GM12878 (cell line): ENCODE measurements at regions of chr2 and their contacts with region 1.

Region 1: DNA sequence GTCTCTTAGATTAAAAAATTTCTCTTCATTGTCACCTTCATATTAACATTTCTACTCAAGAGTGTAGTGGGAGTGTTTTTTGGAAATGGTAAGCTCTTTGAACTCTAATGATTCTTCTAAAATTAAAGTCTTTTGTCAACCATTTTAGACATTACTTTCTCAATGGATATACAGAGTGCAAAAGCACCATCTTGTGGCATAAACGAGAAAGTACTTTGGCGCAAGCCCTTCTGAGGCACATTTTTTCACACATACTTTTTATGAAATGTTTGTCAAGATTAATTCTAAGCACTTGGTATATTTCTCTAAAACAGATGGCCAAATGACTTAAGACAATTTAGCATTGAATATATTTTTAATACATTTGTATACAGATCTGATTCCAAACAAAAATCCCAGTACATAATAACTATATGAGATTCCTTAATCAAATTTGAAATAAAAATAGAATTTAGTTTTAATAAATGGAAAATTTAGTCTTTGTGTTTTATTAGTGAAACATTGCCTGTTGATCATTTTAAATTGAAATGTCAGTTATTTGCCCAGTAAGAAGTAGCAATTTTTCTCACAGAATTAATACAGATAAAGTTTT is 63.3 kb upstream of the GALNT5 start:
- DNase-seq: no peak
- ATAC-seq: peak; percentile 83
- H3K4me3 ChIP-seq: no peak overlapping the region
- H3K27ac ChIP-seq: no peak overlapping the region
- H3K4me1 ChIP-seq: peaks cover 10% of the 10 kb centered on the region; the same call in 1 of the 2 replicates
- H3K27me3 ChIP-seq: peaks cover 0 to 3% of the 10 kb centered on the region in 2 experiments; a peak in 1 of 4 replicates
- CTCF ChIP-seq: peak; percentile 59 to 77 (median 63)
- EP300 ChIP-seq: no peak
- POLR2A ChIP-seq: no peak
- RAD21 ChIP-seq: peak; percentile 93

Region 2: DNA sequence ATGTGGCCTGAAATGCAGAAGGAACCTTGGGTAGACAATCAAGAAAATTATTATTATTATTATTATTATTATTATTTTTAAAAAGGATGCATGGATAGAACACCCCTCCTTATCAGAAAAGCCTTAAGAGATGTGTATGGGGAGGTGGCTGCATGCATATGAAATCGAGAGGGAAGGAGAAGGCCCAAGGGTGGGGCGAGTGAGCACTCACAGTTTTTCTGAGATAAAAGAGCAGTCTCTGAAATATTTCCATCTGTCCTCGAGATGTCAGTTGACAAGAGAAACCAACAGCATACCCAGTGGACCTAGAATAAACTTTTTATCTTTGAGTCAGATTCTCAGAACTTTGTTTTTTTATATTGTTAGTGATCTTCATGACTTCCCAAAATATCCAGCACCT is 475.2 kb before region 1 on chr2:
- CTCF ChIA-PET with region 1: no interaction called
- POLR2A ChIA-PET with region 1: no interaction called
- RAD21 ChIA-PET with region 1: no interaction called
- SMC1A ChIA-PET with region 1: no interaction called
- in situ Hi-C with region 1: no loop called
- intact Hi-C with region 1: no loop called
- DNase-seq: no peak
- ATAC-seq: no peak
- H3K4me3 ChIP-seq: no peak overlapping the region
- H3K27ac ChIP-seq: no peak overlapping the region
- H3K4me1 ChIP-seq: no peaks in the 10 kb centered on the region
- H3K27me3 ChIP-seq: no peaks in the 10 kb centered on the region
- CTCF ChIP-seq: no peak
- EP300 ChIP-seq: no peak
- POLR2A ChIP-seq: no peak
- RAD21 ChIP-seq: no peak

Region 3: DNA sequence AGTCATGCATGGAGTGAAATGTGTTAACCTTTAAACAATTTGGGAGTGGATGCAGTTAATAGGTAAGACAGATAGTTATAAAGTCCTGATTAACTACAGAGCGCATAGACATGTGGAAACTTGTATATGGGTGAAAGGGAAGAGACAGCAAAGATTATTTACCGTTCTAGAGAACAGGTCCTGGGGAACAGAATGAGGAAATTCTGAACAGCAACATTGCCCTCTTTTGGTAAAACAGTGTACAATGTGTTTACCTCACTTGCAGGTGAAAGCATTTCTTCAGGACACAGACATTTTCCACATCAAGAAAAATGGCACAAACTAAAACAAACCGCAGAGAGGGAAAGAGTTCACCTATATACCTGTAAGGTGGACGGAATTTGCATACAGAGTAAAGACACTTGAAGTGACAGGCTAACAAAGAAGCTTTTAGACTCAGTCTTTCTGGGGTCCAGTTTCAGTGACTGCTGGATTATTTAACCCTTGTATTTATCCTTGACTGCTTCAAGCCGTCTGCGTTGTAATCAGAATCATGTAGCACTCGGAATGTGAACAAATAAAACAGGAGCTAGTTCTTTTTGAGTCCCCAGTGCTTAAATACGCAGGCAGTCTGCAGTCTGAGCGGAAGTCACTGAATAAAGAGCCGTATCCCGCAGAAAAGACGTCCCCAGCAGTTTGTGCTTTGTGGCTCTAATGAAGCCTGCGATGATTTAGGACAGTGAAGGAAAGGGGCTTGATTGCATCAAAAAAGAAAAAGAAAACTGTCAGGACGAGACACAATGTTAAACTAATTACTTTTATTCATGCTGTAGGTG is 301.5 kb before region 1 on chr2:
- CTCF ChIA-PET with region 1: interaction called, 6 read pairs
- POLR2A ChIA-PET with region 1: no interaction called
- RAD21 ChIA-PET with region 1: interaction called, 15 read pairs
- SMC1A ChIA-PET with region 1: interaction called, 6 read pairs
- in situ Hi-C with region 1: no loop called
- intact Hi-C with region 1: loop called (anchors 5 kb)
- DNase-seq: peak; percentile 7
- ATAC-seq: peak; percentile 78
- H3K4me3 ChIP-seq: no peak overlapping the region
- H3K27ac ChIP-seq: no peak overlapping the region
- H3K4me1 ChIP-seq: peaks cover 6% of the 10 kb centered on the region; the same call in 1 of the 2 replicates
- H3K27me3 ChIP-seq: peaks cover 0 to 11% of the 10 kb centered on the region in 2 experiments; a peak in 1 of 4 replicates
- CTCF ChIP-seq: peak; percentile 45 to 57 (median 46); a peak in 5 of 6 replicates
- EP300 ChIP-seq: no peak
- POLR2A ChIP-seq: no peak
- RAD21 ChIP-seq: peak; percentile 66

Region 4: GRCh38 chr2:157055660-157056199 is 138.5 kb before region 1 on chr2:
- CTCF ChIA-PET with region 1: interaction called, 100 read pairs
- POLR2A ChIA-PET with region 1: no interaction called
- RAD21 ChIA-PET with region 1: interaction called, 32 read pairs
- SMC1A ChIA-PET with region 1: interaction called, 107 read pairs
- in situ Hi-C with region 1: no loop called
- intact Hi-C with region 1: loop called (anchors 2 kb)
- DNase-seq: no peak
- ATAC-seq: no peak
- H3K4me3 ChIP-seq: no peak overlapping the region
- H3K27ac ChIP-seq: no peak overlapping the region
- H3K4me1 ChIP-seq: no peaks in the 10 kb centered on the region
- H3K27me3 ChIP-seq: peaks cover 0 to 2% of the 10 kb centered on the region in 2 experiments; a peak in 1 of 4 replicates
- CTCF ChIP-seq: peak in 2 of 3 experiments; percentile 14 to 28; a peak in 3 of 6 replicates
- EP300 ChIP-seq: no peak
- POLR2A ChIP-seq: no peak
- RAD21 ChIP-seq: peak; percentile 42; the same call in 1 of the 2 replicates

Region 5: DNA sequence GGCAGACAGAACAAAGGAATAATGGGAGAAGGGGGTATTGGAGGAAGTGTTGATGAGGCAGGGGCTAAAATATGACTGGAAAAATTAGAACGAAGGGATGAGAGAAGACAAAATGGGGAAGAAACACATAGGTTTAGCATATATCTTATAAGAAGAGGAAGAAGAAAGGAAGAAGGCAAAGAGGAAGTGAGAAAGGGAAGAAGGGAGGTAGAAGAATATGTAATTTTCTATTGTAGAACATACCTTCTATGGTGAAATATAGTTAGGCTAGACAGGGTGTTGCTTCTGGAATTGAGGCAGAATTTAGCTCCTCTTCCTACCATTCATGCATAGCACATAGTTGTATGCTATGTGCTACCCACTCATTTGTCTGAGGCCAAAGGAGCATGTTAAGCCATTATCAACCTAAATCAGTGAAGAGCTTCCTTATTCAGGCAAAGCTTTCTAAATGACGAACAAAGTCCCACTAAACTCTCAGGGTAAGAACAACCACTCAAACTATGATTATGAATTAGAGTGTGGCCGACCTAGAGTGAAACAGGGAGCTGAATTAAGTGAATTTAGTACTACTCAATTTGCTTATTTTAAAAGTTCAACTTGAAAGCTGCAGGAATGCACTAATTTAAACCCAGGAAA is 117.5 kb before region 1 on chr2:
- CTCF ChIA-PET with region 1: interaction called, 6 read pairs
- POLR2A ChIA-PET with region 1: no interaction called
- RAD21 ChIA-PET with region 1: interaction called, 9 read pairs
- SMC1A ChIA-PET with region 1: interaction called, 19 read pairs
- in situ Hi-C with region 1: no loop called
- intact Hi-C with region 1: no loop called
- DNase-seq: peak; percentile 5
- ATAC-seq: peak; percentile 78
- H3K4me3 ChIP-seq: no peak overlapping the region
- H3K27ac ChIP-seq: no peak overlapping the region
- H3K4me1 ChIP-seq: peaks cover 8% of the 10 kb centered on the region
- H3K27me3 ChIP-seq: no peaks in the 10 kb centered on the region; a peak in 1 of 4 replicates
- CTCF ChIP-seq: no peak
- EP300 ChIP-seq: no peak
- POLR2A ChIP-seq: no peak
- RAD21 ChIP-seq: no peak

Region 6: DNA sequence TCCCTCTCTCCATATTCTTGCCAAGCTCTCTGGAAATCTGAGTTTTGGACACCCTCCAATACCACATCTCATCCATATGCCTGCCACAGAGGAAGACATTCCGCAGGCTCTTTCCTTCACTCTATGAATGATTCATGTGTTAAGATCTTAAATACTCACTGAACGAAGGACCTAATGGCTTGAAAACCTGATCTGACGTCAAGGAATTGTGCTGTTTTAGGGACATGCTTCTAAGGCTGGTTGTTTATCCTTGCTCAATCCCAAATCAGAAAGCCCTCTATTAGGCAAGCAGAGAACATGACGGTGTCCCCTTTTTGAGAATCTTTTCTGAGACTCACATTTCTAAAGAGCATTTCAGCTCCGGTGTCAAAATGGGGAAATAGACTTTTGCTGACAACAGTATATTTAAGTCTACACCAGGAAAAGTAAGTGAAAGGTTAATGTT is 20.4 kb before region 1 on chr2:
- CTCF ChIA-PET with region 1: interaction called, 17 read pairs
- POLR2A ChIA-PET with region 1: interaction called, 3 read pairs
- RAD21 ChIA-PET with region 1: interaction called, 4 read pairs
- SMC1A ChIA-PET with region 1: interaction called, 34 read pairs
- in situ Hi-C with region 1: no loop called
- intact Hi-C with region 1: no loop called
- DNase-seq: no peak
- ATAC-seq: no peak
- H3K4me3 ChIP-seq: no peak overlapping the region
- H3K27ac ChIP-seq: no peak overlapping the region
- H3K4me1 ChIP-seq: no peaks in the 10 kb centered on the region
- H3K27me3 ChIP-seq: no peaks in the 10 kb centered on the region; a peak in 1 of 4 replicates
- CTCF ChIP-seq: no peak
- EP300 ChIP-seq: no peak
- POLR2A ChIP-seq: no peak
- RAD21 ChIP-seq: no peak

Region 7: GRCh38 chr2:157204401-157204800 is 10.2 kb after region 1 on chr2:
- CTCF ChIA-PET with region 1: interaction called, 12 read pairs
- POLR2A ChIA-PET with region 1: no interaction called
- RAD21 ChIA-PET with region 1: interaction called, 3 read pairs
- SMC1A ChIA-PET with region 1: interaction called, 5 read pairs
- in situ Hi-C with region 1: no loop called
- intact Hi-C with region 1: no loop called
- DNase-seq: no peak
- ATAC-seq: no peak
- H3K4me3 ChIP-seq: no peak overlapping the region
- H3K27ac ChIP-seq: no peak overlapping the region
- H3K4me1 ChIP-seq: no peaks in the 10 kb centered on the region
- H3K27me3 ChIP-seq: no peaks in the 10 kb centered on the region
- CTCF ChIP-seq: no peak
- EP300 ChIP-seq: no peak
- POLR2A ChIP-seq: no peak
- RAD21 ChIP-seq: no peak

Region 8: GRCh38 chr2:157321466-157321865 is 127.3 kb after region 1 on chr2:
- CTCF ChIA-PET with region 1: no interaction called
- POLR2A ChIA-PET with region 1: no interaction called
- RAD21 ChIA-PET with region 1: no interaction called
- SMC1A ChIA-PET with region 1: no interaction called
- in situ Hi-C with region 1: no loop called
- intact Hi-C with region 1: no loop called
- DNase-seq: no peak
- ATAC-seq: no peak
- H3K4me3 ChIP-seq: no peak overlapping the region
- H3K27ac ChIP-seq: no peak overlapping the region
- H3K4me1 ChIP-seq: no peaks in the 10 kb centered on the region
- H3K27me3 ChIP-seq: no peaks in the 10 kb centered on the region
- CTCF ChIP-seq: no peak
- EP300 ChIP-seq: no peak
- POLR2A ChIP-seq: no peak
- RAD21 ChIP-seq: no peak